ENCODE measurements at regions of chr10 and their contacts with region 1.

Region 1: DNA sequence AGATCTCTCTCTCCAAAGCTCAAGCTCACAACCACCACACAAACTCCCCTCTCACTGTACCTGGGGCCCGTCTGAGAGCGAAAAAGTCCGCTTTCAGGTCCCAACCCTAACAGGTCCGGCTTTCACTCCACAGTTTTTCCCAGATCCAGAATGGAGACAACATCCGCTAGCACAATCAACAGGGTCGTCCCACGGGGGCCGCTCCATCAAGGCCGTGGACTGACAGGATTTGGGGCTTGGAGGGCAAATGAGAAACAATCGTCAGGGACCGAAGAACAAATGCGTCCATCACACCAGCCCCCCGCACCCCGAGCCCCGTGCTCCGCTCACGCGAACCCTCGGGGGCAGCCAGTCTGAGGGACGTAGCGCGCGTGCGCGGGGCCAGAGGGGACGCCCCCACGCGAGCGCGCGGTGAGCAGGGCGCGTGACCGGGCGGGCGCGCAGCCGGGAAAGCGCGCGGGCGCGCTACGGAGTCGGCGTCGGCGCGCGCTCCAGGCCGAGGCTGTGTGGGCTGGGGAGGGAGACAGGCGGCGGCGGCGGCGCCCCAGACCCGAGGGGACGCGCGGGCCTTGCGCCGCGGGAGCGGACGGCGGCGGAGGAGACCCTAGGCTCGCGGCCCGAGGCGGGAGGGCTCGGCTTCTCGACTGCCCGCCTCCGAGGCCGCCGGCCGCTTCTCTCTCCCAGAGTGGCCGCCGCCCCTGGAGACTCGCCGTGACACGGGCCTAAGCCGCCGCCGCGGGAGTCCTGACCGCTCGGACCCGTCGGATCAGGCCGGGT is at the start of gene SLK:
- DNase-seq: peak; percentile 60 to 91 (median 74)
- H3K4me3 ChIP-seq: peak within 1 kb of the TSS; percentile 59 to 96 (median 85)
- H3K27ac ChIP-seq: peak within 1 kb of the TSS; percentile 68 to 99 (median 93)
- H3K27me3 ChIP-seq: no peaks in the 10 kb centered on the region
- CTCF ChIP-seq: peak in 20 of 56 donors; percentile 4 to 53 (median 22)
- total RNA-seq, gene SLK: 27.0 to 53.9 (median 38.6) TPM

Region 2: GRCh38 chr10:103870516-103870915 is 96.3 kb before region 1 on chr10:
- intact Hi-C with region 1: no loop called
- DNase-seq: no peak
- H3K4me3 ChIP-seq: no peak overlapping the region
- H3K27ac ChIP-seq: no peak overlapping the region
- H3K27me3 ChIP-seq: no peaks in the 10 kb centered on the region
- CTCF ChIP-seq: no peak

Region 3: DNA sequence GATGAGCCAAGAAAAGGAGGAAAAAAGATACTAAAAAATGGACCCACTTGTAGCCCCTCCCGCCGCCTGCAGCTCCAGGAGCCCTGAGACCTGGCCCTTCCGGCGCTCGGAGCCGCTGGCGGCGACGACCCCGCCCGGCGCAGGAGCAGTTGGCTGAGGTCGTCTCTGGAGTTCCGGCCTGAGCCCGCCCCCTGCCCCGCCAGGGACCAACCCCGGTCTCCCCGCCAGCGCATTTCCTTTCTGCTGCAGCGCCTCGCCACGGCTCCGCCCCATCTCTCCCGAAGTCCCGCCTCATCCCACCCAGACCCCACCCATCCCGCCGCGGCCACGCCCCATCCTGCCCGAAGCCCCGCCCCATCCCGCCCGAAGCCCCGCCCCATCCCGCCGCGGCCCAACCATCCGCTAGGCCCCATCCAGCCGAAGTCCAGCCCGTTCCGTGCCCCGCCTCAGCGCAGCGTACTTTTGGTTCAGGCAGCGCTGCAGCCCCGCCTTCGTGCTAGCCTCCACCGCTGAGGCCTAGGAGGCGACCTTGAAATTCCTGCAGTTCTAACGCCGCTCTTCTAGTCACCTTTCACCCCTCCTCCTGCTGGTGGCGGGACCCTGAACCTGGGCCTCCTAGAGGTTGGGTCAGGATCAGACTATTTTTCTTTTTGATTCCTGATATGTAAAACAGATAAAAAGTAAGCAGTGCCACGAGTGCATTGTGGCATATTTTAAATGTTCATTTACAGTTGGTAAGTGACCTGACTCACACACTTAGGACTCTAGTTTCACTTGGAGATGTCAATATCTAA is 48.6 kb before region 1 on chr10 and contains the start of gene STN1:
- intact Hi-C with region 1: loop called (anchors 1 kb)
- DNase-seq: peak; percentile 93 to 98 (median 97)
- H3K4me3 ChIP-seq: peak within 1 kb of the TSS; percentile 60 to 98 (median 81)
- H3K27ac ChIP-seq: peak within 1 kb of the TSS; percentile 79 to 98 (median 94)
- H3K27me3 ChIP-seq: no peaks in the 10 kb centered on the region
- CTCF ChIP-seq: peak in 32 of 56 donors; percentile 2 to 57 (median 28)
- total RNA-seq, gene STN1: 7.9 to 24.9 (median 15.5) TPM

Region 4: DNA sequence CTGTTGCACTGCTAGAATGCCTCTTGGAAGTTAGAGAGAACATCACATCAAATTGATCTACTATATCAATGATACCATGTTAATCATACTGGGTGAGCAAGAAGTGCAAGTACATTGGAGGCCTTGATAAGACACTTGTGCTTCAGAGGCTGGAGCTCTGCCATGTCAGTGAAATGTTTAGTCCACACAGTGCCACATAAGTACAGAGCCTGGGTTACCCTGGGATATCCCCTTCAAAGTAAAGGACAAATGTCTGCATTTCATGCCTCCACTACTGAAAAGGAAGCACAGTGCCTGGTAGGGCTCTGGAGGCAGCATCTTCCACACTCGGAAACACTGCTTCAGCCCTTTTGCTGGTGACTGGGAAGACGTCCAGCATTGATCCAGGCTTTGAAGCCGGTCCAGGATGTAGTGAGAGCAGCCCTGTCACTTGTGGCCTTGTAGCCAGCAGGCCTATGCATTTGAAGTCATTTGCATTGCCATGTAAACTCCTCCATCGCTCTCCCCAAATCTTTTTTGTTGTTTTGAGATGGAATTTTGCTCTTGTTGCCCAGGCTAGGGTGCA is 33.2 kb before region 1 on chr10:
- intact Hi-C with region 1: loop called in 1 of 2 experiments (anchors 5 kb)
- DNase-seq: peak; percentile 53 to 86 (median 72)
- H3K4me3 ChIP-seq: no peak overlapping the region
- H3K27ac ChIP-seq: peak overlapping the region in 52 of 59 donors; percentile 0 to 83 (median 62)
- H3K27me3 ChIP-seq: no peaks in the 10 kb centered on the region
- CTCF ChIP-seq: peak in 18 of 56 donors; percentile 4 to 32 (median 22)

Region 5: DNA sequence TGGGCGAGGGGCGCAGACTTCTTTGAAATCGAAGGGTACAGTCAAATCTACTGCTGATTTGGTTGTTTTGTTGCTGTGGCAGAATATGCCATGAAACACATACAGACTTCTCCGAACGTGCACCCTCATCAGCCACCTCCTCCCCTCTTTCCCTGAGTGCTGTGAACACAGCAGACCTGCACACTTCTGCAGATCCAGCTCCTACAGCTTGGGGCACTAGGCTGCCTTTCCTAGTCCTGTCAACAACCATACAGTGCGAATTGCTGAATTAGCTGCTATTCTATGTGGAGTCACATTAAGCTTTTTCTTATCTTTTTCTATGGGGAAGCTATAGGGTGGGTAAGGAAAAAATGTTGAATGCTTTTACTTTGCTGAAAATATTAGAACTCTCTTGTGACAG is 61.3 kb after region 1 on chr10:
- intact Hi-C with region 1: loop called (anchors 5 kb)
- DNase-seq: peak in 8 of 10 donors; percentile 34 to 80 (median 70)
- H3K4me3 ChIP-seq: peak overlapping the region in 2 of 59 donors; percentile 4 to 17
- H3K27ac ChIP-seq: peak overlapping the region in 57 of 59 donors; percentile 16 to 93 (median 79)
- H3K27me3 ChIP-seq: no peaks in the 10 kb centered on the region
- CTCF ChIP-seq: peak in 54 of 56 donors; percentile 30 to 74 (median 60)